ENCODE measurements at regions of chr5 and their contacts with region 1.

Region 1: GRCh38 chr5:172071289-172071875 is 64.9 kb upstream of the FBXW11 start:
- DNase-seq: peak in 1 of 5 donors; percentile 30
- H3K4me3 ChIP-seq: no peak overlapping the region
- H3K4me3 Mint-ChIP-seq: peak overlapping the region in 5 of 7 donors; percentile 1 to 26 (median 6)
- H3K27ac ChIP-seq: no peak overlapping the region
- H3K27ac Mint-ChIP-seq: peak overlapping the region; percentile 21 to 78 (median 66)
- H3K4me1 ChIP-seq: peaks cover 49% of the 10 kb centered on the region
- H3K4me1 Mint-ChIP-seq: peaks cover 53 to 65% (median 62%) of the 10 kb centered on the region in 3 donors
- H3K27me3 ChIP-seq: no peaks in the 10 kb centered on the region
- H3K27me3 Mint-ChIP-seq: no peaks in the 10 kb centered on the region

Region 2: GRCh38 chr5:172114875-172115422 is 43.6 kb after region 1 on chr5:
- CTCF ChIA-PET with region 1: no interaction called
- POLR2A ChIA-PET with region 1: interaction called, 10 read pairs
- DNase-seq: peak; percentile 37 to 85 (median 71)
- H3K4me3 ChIP-seq: peak overlapping the region; percentile 40
- H3K4me3 Mint-ChIP-seq: peak overlapping the region; percentile 65 to 92 (median 78)
- H3K27ac ChIP-seq: peak overlapping the region; percentile 48
- H3K27ac Mint-ChIP-seq: peak overlapping the region; percentile 83 to 100 (median 96)
- H3K4me1 ChIP-seq: peaks cover 86% of the 10 kb centered on the region
- H3K4me1 Mint-ChIP-seq: peaks cover 73 to 90% (median 89%) of the 10 kb centered on the region in 3 donors
- H3K27me3 ChIP-seq: no peaks in the 10 kb centered on the region
- H3K27me3 Mint-ChIP-seq: peaks cover 0 to 4% of the 10 kb centered on the region in 2 donors

Region 3: DNA sequence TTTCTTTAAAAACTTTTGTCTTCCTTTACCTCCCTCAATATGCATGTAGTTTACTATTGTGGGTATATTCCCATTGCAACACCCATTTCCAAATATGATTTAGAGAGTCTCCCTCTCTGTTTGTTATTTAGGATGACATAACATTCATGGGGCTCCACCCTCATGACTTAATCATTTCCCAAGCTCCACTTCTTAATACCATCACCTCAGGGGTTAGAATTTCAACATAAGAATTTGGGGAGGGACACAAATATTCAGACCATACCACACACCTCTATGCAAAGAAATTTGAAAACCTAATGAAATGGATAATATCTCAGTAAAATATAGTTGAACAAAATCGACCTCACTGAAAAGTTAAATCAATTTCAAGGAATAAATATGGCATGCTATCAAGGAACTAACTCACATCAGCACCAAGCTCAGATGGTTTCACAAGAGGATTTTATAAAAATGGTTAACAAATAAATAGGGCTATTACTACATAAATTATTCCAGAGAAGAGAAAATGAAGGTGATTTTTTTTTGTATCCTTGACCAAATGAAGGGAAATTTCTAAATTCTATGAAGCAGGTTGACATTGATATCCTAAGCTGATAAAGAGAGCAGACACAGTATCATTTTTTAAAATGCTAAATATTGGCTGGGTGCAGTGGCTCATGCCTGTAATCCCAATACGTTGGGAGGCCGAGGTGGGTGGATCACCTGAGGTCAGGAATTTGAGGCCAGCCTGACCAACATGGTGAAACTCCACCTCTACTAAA is 232.4 kb after region 1 on chr5:
- CTCF ChIA-PET with region 1: no interaction called
- POLR2A ChIA-PET with region 1: no interaction called
- DNase-seq: no peak
- H3K4me3 ChIP-seq: no peak overlapping the region
- H3K4me3 Mint-ChIP-seq: no peak overlapping the region
- H3K27ac ChIP-seq: no peak overlapping the region
- H3K27ac Mint-ChIP-seq: no peak overlapping the region
- H3K4me1 ChIP-seq: no peaks in the 10 kb centered on the region
- H3K4me1 Mint-ChIP-seq: no peaks in the 10 kb centered on the region
- H3K27me3 ChIP-seq: no peaks in the 10 kb centered on the region
- H3K27me3 Mint-ChIP-seq: peaks cover 8 to 41% of the 10 kb centered on the region in 2 donors

Measured in CD8-positive, alpha-beta memory T cell (primary cell).